ENCODE measurements at regions of chr7 and their contacts with region 1.

Region 1: DNA sequence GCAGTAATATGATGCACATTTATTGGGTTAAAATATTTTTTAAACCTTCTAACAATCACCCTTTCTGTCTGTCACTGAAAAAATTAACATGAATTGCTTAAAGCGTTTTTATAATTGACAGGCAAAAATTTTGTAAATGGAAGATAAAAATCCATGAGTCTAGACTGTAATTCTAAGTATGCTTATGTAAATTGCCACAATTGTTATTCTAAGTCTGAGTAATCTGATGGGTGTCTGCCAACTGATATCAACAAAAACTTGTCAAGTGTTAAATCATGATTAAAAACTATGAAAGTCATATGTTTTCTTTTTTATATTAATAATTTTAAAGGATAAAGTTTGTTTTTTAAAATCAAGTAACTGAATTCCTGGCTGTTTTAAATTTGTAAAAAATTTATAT is 208.2 kb downstream of the CDK14 start:
- DNase-seq: no peak
- ATAC-seq: no peak
- H3K4me3 Mint-ChIP-seq: no peak overlapping the region
- H3K27ac Mint-ChIP-seq: no peak overlapping the region
- H3K4me1 Mint-ChIP-seq: no peaks in the 10 kb centered on the region
- H3K27me3 Mint-ChIP-seq: no peaks in the 10 kb centered on the region; the same call in 1 of the 2 replicates
- CTCF ChIP-seq: no peak

Region 2: GRCh38 chr7:90690159-90690858 is 114.1 kb before region 1 on chr7:
- CTCF ChIA-PET with region 1: no interaction called
- POLR2A ChIA-PET with region 1: no interaction called
- DNase-seq: no peak
- ATAC-seq: no peak
- H3K4me3 Mint-ChIP-seq: no peak overlapping the region
- H3K27ac Mint-ChIP-seq: no peak overlapping the region
- H3K4me1 Mint-ChIP-seq: peaks cover 30% of the 10 kb centered on the region
- H3K27me3 Mint-ChIP-seq: no peaks in the 10 kb centered on the region
- CTCF ChIP-seq: no peak

Region 3: GRCh38 chr7:90736968-90737939 is 67.1 kb before region 1 on chr7:
- CTCF ChIA-PET with region 1: no interaction called
- POLR2A ChIA-PET with region 1: no interaction called
- DNase-seq: no peak
- ATAC-seq: no peak
- H3K4me3 Mint-ChIP-seq: no peak overlapping the region
- H3K27ac Mint-ChIP-seq: no peak overlapping the region
- H3K4me1 Mint-ChIP-seq: peaks cover 4% of the 10 kb centered on the region; the same call in 1 of the 2 replicates
- H3K27me3 Mint-ChIP-seq: no peaks in the 10 kb centered on the region
- CTCF ChIP-seq: no peak

Region 4: DNA sequence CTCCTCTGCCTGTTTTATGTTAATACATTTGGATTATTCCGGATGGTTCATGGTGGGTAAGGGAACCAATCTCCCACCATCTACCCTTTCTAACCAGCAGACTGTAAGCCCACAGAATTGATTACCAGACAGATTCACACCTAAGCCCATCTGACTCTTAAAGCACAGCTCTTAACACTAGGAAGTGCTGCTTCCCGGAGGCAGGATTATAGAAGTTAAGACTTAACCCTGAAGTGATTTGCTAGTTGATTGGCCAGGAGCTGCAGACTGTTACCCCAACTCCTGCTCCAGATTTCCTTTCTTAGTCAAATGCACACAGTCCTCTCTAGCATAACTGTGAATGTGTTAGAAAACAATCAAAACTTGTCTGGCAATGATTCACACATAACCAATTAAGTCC is 13.5 kb after region 1 on chr7:
- CTCF ChIA-PET with region 1: no interaction called
- POLR2A ChIA-PET with region 1: interaction called, 10 read pairs
- DNase-seq: no peak
- ATAC-seq: peak; percentile 95
- H3K4me3 Mint-ChIP-seq: no peak overlapping the region
- H3K27ac Mint-ChIP-seq: peak overlapping the region; percentile 79
- H3K4me1 Mint-ChIP-seq: peaks cover 18% of the 10 kb centered on the region
- H3K27me3 Mint-ChIP-seq: no peaks in the 10 kb centered on the region
- CTCF ChIP-seq: no peak